Activated CD4-positive, alpha-beta T cell treated with anti-CD3 and anti-CD28 coated beads for 36 hours (primary cell): ENCODE measurements at regions of chr9 and their contacts with region 1.

Region 1: DNA sequence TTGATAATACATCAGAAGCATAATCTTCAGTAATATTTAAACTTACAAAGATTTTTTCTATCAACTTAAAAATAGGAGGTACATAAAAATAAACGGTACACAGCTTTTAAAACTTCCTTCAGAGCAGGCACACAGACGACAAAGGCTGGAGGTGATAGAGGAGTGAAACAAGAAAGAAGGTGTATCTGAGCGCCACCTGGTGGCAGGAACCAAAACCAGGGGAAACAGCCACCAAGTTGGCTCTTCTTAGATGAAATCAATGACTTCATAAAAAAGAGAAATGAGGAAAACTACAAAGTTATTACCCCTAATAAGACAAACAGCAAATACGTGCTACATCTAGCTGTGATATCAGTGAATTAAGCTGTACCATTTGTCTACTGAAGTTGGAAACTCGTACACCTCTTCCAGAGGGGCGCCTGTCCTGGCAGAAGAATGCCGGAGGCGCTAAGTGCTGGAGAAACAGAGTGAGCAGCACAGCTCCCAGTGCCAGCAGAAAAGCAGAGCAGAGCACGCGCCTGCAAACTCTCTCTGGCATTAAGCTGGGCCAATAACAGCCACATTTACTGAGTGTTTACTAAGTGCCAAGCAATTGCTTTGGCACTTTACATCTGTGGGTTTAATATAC is 85.9 kb downstream of the SETX start:
- DNase-seq: peak; percentile 87
- ATAC-seq: peak; percentile 80
- H3K4me3 Mint-ChIP-seq: no peak overlapping the region
- H3K27ac Mint-ChIP-seq: peak overlapping the region; percentile 67
- H3K4me1 Mint-ChIP-seq: peaks cover 17% of the 10 kb centered on the region
- H3K27me3 Mint-ChIP-seq: no peaks in the 10 kb centered on the region

Region 2: DNA sequence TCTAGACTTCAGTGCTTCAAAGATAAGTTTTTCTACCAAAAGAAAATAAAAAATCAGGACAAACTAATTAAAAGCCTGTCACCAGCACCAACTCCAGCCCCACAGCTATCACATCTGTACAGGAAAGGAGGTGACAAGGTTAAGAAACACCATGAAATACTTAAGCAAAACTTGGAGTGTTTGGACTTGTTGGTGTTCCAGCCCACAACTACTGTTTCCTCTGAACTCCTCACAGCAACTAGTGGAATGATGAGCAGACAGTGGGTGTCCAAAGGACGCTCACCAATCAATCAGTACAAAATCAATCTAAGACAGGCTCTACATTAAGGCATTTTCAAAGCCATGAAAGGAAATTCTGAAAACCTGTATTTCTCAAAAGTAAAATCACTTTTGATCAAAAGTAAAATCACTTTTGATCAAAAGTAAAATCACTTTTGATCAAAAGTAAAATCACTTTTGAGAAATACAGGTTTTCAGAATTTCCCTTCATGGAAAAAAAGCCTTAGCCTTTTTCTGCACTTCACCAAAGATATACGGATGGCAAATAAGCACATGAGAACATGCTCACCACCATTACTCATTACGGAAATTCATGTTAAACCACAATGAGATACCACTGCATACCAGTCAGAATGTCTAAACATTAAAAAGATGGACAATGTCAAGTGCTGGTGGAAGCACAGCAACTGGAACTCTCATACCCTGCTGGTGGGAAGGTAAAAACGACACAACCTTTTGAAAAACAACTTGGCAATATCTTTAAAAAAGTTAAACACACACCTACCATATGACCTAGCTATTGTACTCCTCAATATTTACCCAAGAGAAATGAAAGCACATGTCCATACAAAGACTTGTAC is 268.9 kb before region 1 on chr9:
- CTCF ChIA-PET with region 1: no interaction called
- POLR2A ChIA-PET with region 1: no interaction called
- intact Hi-C with region 1: loop called in 1 of 2 experiments (anchors 5 kb)
- DNase-seq: no peak
- ATAC-seq: peak; percentile 85
- H3K4me3 Mint-ChIP-seq: no peak overlapping the region
- H3K27ac Mint-ChIP-seq: no peak overlapping the region
- H3K4me1 Mint-ChIP-seq: peaks cover 20% of the 10 kb centered on the region
- H3K27me3 Mint-ChIP-seq: no peaks in the 10 kb centered on the region